AG04450 (cell line): ENCODE measurements at regions of chr1 and their contacts with region 1.

Region 1: GRCh38 chr1:110495926-110496600 is 22.9 kb downstream of the KCNA10 start:
- DNase-seq: peak; percentile 63
- H3K4me3 ChIP-seq: no peak overlapping the region
- H3K27ac ChIP-seq: no peak overlapping the region
- H3K27me3 ChIP-seq: peaks cover 22% of the 10 kb centered on the region
- CTCF ChIP-seq: peak; percentile 99

Region 2: DNA sequence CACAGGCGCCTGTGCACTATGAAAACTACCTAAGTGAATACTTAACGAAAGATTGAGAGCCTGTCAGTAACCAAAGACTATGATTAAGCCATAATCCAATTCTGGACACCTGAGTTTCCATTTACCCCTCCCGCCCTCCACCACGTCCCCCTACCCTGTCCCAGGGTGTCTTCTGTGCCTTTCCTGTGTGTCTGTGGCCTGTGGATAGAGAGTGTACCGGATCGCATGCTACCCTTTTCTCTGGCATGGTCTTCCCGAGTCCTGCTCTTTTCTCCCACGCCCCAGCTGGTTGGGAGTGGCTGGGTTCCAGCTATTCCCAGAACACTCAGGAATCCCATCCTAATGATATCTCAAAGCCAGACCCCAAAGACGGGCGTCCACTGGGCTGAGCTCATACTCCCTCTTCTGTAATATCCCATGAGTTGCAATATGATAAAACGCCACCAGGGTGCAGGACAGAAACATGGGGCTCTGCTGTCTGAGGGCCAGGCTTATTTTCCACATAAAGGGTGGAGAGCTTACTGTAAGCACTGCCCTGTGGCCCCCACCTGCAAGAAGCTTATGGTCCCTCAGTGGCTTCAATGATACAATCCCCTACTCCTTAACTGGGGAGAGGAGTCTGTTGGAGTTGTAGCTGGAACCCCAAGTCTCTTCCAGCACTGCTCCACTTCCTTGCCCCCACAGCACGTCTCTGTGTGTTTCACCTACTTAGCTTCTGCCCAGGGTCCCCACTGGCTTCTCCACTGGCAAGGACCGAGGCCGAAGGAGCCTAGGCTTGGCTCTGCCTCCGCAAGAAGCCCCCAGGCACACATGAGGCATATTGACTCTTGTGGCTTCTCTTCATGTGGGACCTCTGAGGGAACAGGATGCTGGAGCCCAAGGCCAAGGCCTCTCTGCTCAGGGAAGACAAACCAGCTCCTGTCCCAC is 408.0 kb before region 1 on chr1:
- CTCF ChIA-PET with region 1: interaction called, 13 read pairs
- POLR2A ChIA-PET with region 1: no interaction called
- DNase-seq: peak; percentile 20
- H3K4me3 ChIP-seq: no peak overlapping the region
- H3K27ac ChIP-seq: no peak overlapping the region
- H3K27me3 ChIP-seq: peaks cover 73% of the 10 kb centered on the region
- CTCF ChIP-seq: peak; percentile 72

Region 3: GRCh38 chr1:110209715-110210603 is 286.1 kb before region 1 on chr1 and contains the start of gene KCNC4:
- CTCF ChIA-PET with region 1: interaction called, 134 read pairs
- POLR2A ChIA-PET with region 1: interaction called, 3 read pairs
- DNase-seq: no peak
- H3K4me3 ChIP-seq: peak within 1 kb of the TSS; percentile 60
- H3K27ac ChIP-seq: no peak within 1 kb of the TSS
- H3K27me3 ChIP-seq: peaks cover 28% of the 10 kb centered on the region
- CTCF ChIP-seq: no peak
- polyA plus RNA-seq, gene KCNC4: 0.36 and 0.63 TPM in 2 replicates

Region 4: DNA sequence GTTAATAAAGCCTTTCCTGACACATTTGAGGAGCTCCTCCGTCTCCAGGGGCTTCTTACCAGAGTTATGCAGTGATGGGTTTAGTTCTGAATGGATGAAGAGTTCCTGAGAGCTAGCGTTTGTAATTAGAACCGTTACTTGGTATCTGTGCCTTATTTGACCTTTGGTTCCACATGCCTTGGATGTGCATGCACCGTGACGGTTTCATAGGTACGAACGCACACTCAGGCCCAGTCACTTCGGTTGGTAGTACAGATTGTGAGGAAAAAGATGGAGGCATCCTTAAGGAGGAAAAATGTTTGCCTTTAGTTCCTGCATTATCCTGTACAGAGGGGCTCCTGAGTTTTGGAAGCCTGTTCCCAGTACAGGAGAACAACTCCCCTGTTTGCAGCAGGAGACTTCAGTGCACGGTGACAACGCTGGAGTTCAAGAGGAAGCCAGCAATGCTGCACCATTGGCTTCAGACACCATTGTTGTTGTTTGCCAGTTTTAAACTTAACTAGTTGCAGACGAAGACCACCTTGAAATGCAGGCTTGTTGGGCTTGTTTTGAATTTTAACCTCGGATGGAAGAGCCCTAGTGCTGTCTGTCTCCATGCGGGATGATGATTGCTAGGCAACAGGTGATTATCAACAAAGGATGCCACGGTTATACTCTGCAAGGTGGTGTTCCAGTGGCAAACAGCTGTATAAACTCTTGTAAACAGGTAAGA is 148.7 kb before region 1 on chr1:
- CTCF ChIA-PET with region 1: interaction called, 11 read pairs
- POLR2A ChIA-PET with region 1: no interaction called
- DNase-seq: no peak
- H3K4me3 ChIP-seq: no peak overlapping the region
- H3K27ac ChIP-seq: no peak overlapping the region
- H3K27me3 ChIP-seq: no peaks in the 10 kb centered on the region
- CTCF ChIP-seq: no peak

Region 5: GRCh38 chr1:110430366-110430765 is 65.7 kb before region 1 on chr1:
- CTCF ChIA-PET with region 1: interaction called, 14 read pairs
- POLR2A ChIA-PET with region 1: no interaction called
- DNase-seq: no peak
- H3K4me3 ChIP-seq: no peak overlapping the region
- H3K27ac ChIP-seq: no peak overlapping the region
- H3K27me3 ChIP-seq: peaks cover 43% of the 10 kb centered on the region
- CTCF ChIP-seq: no peak

Region 6: DNA sequence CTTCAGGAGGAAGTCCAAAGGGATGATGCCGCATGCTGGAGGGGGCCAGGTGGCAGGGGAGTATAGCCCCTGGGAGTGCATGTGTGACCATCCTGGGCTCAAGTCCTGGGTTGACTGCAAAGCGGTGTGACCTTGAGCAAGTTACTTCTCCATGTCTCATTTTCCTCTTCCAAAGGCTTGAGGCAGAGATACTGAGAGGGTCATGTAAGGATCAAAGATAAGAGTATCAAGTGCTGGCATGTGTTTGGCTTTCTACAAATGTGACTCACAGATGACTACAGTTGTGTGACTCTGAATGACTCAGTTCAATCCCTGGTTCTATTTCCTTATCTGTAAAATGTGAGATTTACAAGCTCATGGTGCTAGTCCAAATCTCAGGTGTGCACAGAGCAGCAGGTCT is 19.0 kb before region 1 on chr1:
- CTCF ChIA-PET with region 1: interaction called, 24 read pairs
- POLR2A ChIA-PET with region 1: no interaction called
- DNase-seq: peak; percentile 16
- H3K4me3 ChIP-seq: no peak overlapping the region
- H3K27ac ChIP-seq: no peak overlapping the region
- H3K27me3 ChIP-seq: peaks cover 7% of the 10 kb centered on the region
- CTCF ChIP-seq: no peak

Region 7: DNA sequence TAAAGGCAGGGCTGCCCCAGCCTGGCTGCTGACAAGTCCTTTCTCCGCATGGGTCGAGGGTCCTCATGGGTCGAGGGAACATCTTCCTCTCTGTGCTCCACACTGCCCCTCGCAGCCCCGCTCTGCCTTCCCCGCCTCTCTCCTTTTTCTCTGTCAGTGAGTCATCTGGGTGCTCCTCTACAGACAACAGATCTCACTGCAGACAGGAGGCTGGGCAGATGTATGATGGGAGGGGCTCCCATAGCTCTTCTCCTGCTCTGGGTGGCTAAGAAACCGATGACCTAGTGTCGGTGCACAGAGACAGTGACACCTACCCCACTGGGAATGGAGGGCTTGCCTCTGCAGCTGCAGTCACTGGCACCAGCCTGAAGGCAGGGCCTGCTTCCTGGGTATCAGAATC is 17.4 kb after region 1 on chr1:
- CTCF ChIA-PET with region 1: interaction called, 22 read pairs
- POLR2A ChIA-PET with region 1: no interaction called
- DNase-seq: no peak
- H3K4me3 ChIP-seq: no peak overlapping the region
- H3K27ac ChIP-seq: no peak overlapping the region
- H3K27me3 ChIP-seq: peaks cover 2% of the 10 kb centered on the region
- CTCF ChIP-seq: no peak